ENCODE measurements at regions of chr1 and their contacts with region 1.

Region 1: GRCh38 chr1:205977402-205978014 is 25.7 kb downstream of the RAB7B start:
- DNase-seq: peak; percentile 70 to 78 (median 76)
- H3K4me3 ChIP-seq: no peak overlapping the region
- H3K4me3 Mint-ChIP-seq: no peak overlapping the region
- H3K27ac ChIP-seq: no peak overlapping the region
- H3K27ac Mint-ChIP-seq: no peak overlapping the region
- H3K4me1 ChIP-seq: peaks cover 0 to 12% of the 10 kb centered on the region in 2 donors
- H3K4me1 Mint-ChIP-seq: peaks cover 7% of the 10 kb centered on the region
- H3K27me3 ChIP-seq: no peaks in the 10 kb centered on the region
- H3K27me3 Mint-ChIP-seq: peaks cover 1 to 3% (median 2%) of the 10 kb centered on the region in 3 donors
- CTCF ChIP-seq: peak; percentile 94

Region 2: DNA sequence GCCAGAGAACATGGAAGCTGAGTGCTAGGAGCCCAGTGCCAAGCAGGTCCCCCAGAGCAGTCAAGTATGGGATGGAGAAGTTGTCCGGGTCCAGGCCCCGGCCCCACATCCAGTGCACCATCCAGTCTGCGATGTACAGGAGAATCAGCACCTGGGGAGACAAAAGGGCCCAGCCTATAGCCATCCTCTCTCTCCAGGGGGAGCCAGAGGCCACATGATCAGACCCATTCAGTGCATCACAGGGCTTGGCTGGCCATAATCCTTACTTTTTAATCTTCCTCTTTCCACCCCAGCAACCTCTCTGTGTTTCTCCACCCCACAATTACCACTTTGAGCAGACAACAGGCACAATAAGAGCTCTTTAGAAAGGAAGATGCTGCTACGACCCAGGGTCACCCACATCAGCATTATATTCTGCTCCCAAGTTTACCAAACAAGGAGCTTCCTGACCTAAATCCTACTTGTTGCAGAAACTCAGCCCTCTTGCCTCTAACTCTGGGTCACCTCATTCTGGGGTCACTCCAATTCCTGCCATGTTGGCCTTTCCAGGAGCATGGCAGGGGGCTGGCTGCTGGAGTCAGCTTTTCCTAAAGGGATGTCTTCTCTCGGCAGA is 185.8 kb before region 1 on chr1:
- intact Hi-C with region 1: loop called (anchors 2 to 5 kb)
- DNase-seq: peak; percentile 51 to 65 (median 63)
- H3K4me3 ChIP-seq: no peak overlapping the region
- H3K4me3 Mint-ChIP-seq: no peak overlapping the region
- H3K27ac ChIP-seq: no peak overlapping the region
- H3K27ac Mint-ChIP-seq: peak overlapping the region in 1 of 7 donors; percentile 39
- H3K4me1 ChIP-seq: peaks cover 19% of the 10 kb centered on the region in 2 donors
- H3K4me1 Mint-ChIP-seq: peaks cover 27% of the 10 kb centered on the region
- H3K27me3 ChIP-seq: no peaks in the 10 kb centered on the region
- H3K27me3 Mint-ChIP-seq: no peaks in the 10 kb centered on the region
- CTCF ChIP-seq: peak; percentile 80

Region 3: DNA sequence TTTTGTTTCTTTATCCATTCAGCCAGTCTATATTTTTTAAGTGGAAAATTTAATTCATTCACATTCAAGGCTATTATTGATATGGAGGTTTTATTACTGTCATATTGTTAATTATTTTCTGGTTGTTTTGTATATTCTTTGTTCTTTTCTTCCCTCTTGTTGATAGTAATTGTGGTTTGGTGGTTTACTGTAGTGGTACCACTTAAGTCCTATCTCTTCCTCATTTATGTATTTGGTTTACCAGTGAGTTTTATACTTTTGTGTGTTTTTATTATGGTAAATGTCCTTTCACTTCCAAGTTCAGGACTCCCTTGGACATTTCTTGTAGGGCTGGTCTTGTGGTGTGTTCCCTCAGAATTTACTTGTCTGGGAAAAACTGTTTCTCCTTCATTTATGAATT is 99.5 kb before region 1 on chr1:
- intact Hi-C with region 1: no loop called
- DNase-seq: no peak
- H3K4me3 ChIP-seq: no peak overlapping the region
- H3K4me3 Mint-ChIP-seq: no peak overlapping the region
- H3K27ac ChIP-seq: no peak overlapping the region
- H3K27ac Mint-ChIP-seq: no peak overlapping the region
- H3K4me1 ChIP-seq: no peaks in the 10 kb centered on the region
- H3K4me1 Mint-ChIP-seq: no peaks in the 10 kb centered on the region
- H3K27me3 ChIP-seq: peaks cover 40 to 61% of the 10 kb centered on the region in 2 donors
- H3K27me3 Mint-ChIP-seq: peaks cover 37 to 54% (median 42%) of the 10 kb centered on the region in 3 donors
- CTCF ChIP-seq: no peak

Region 4: GRCh38 chr1:205933671-205934618 is 43.6 kb before region 1 on chr1:
- intact Hi-C with region 1: no loop called
- DNase-seq: peak; percentile 55 to 84 (median 69)
- H3K4me3 ChIP-seq: peak overlapping the region in 1 of 3 experiments; percentile 52
- H3K4me3 Mint-ChIP-seq: peak overlapping the region in 1 of 2 donors; percentile 76
- H3K27ac ChIP-seq: peak overlapping the region in 1 of 2 donors; percentile 78
- H3K27ac Mint-ChIP-seq: peak overlapping the region; percentile 3 to 87 (median 83)
- H3K4me1 ChIP-seq: peaks cover 39 to 79% of the 10 kb centered on the region in 2 donors
- H3K4me1 Mint-ChIP-seq: peaks cover 51% of the 10 kb centered on the region
- H3K27me3 ChIP-seq: no peaks in the 10 kb centered on the region
- H3K27me3 Mint-ChIP-seq: peaks cover 3 to 14% (median 13%) of the 10 kb centered on the region in 3 donors
- CTCF ChIP-seq: no peak